ENCODE measurements at regions of chr14 and their contacts with region 1.

Region 1: GRCh38 chr14:21395444-21395843 is 11.6 kb upstream of the SUPT16H start:
- DNase-seq: no peak
- H3K4me3 ChIP-seq: no peak overlapping the region
- H3K4me1 ChIP-seq: no peaks in the 10 kb centered on the region
- H3K27me3 ChIP-seq: no peaks in the 10 kb centered on the region

Region 2: GRCh38 chr14:21024585-21025370 is 370.7 kb before region 1 on chr14 and contains the start of gene NDRG2:
- in situ Hi-C with region 1: no loop called
- DNase-seq: peak; percentile 75 to 94
- H3K4me3 ChIP-seq: peak within 1 kb of the TSS; percentile 68
- H3K4me1 ChIP-seq: peaks cover 5% of the 10 kb centered on the region
- H3K27me3 ChIP-seq: no peaks in the 10 kb centered on the region

Region 3: GRCh38 chr14:21317398-21317797 is 78.0 kb before region 1 on chr14:
- in situ Hi-C with region 1: no loop called
- DNase-seq: no peak
- H3K4me3 ChIP-seq: no peak overlapping the region
- H3K4me1 ChIP-seq: peaks cover 6% of the 10 kb centered on the region
- H3K27me3 ChIP-seq: no peaks in the 10 kb centered on the region; the same call in 1 of the 2 replicates

Region 4: DNA sequence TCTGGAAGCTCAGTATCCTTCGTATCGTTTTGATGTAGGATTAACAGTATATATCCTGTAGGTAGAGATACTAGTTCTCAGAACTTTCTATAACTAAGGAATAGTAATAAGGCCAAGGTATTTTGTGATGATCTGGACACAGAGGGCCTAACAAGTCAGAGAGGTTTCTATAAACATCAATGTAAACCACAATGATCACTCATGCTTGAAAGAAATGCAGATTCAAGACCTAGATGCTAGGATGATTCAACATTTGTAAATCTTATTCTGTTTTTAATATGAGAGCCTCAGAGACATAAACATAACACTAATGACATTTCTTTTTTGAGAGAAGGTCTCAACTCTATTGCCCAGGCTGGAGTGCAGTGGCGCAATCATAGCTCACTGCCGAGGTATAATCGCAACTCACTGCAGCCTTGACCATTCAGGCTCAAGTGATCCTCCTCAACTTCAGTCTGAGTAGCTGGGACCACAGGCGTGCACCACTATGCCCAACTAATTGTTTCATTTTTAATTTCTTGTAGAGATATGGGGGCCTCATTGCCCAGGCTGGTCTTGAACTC is 27.8 kb before region 1 on chr14:
- in situ Hi-C with region 1: loop called (anchors 5 kb)
- DNase-seq: no peak
- H3K4me3 ChIP-seq: no peak overlapping the region
- H3K4me1 ChIP-seq: no peaks in the 10 kb centered on the region
- H3K27me3 ChIP-seq: no peaks in the 10 kb centered on the region

Region 5: GRCh38 chr14:21476925-21477681 is 81.7 kb after region 1 on chr14 and contains the starts of genes RAB2B and TOX4:
- in situ Hi-C with region 1: no loop called
- DNase-seq: peak; percentile 98
- H3K4me3 ChIP-seq: peak within 1 kb of the TSS; percentile 77
- H3K4me1 ChIP-seq: peaks cover 2% of the 10 kb centered on the region; the same call in 1 of the 2 replicates
- H3K27me3 ChIP-seq: no peaks in the 10 kb centered on the region

Measured in HAP-1 (cell line).